Colonic mucosa (tissue), 4 donors: ENCODE measurements at regions of chr20 and their contacts with region 1.

Region 1: GRCh38 chr20:6075428-6076219 is 21.8 kb upstream of the LRRN4 start:
- DNase-seq: no peak
- H3K4me3 ChIP-seq: no peak overlapping the region
- H3K27ac ChIP-seq: no peak overlapping the region
- H3K4me1 ChIP-seq: no peaks in the 10 kb centered on the region
- H3K27me3 ChIP-seq: no peaks in the 10 kb centered on the region
- CTCF ChIP-seq: no peak

Region 2: DNA sequence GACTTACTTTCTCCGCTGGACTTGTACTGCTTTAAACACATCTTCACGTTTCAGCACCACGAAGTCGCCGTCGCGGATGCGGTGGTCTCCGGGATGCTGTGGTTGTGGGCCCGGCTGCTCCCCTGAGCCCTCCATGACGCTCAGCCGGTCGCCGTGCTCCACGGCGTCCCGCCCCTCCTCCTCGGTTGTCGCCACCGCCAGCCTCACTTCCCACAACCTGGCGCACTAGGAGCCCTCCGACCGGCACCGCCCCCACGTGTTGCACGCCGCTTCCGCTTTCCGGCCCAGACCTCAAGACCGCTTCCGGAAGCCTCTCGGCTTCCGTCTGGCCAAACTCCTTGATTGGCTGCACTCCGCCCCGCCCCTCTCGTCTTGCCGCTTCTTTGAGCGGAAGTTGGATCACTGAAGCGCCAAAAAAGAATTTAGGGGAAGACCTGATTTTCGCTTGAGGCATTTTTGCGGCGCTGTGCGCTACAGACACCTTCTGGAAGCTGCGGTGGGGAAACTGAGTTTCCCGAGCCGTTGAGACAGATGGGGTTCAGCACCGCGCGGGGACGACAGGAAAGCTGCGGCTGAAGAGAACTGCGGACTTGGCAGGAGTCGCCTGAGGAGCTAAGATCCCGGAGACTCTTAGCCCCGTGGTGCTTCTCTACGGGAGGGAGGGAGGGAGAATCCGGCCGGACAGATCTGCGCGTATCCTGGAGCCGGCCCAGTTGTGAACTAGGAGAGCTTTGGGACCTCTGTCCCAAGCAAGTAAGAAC is 125.2 kb before region 1 on chr20 and contains the starts of genes MCM8 and TRMT6:
- intact Hi-C with region 1: loop called (anchors 5 kb)
- DNase-seq: peak; percentile 98
- H3K4me3 ChIP-seq: peak within 1 kb of the TSS; percentile 92
- H3K27ac ChIP-seq: peak within 1 kb of the TSS; percentile 4
- H3K4me1 ChIP-seq: peaks cover 9% of the 10 kb centered on the region
- H3K27me3 ChIP-seq: no peaks in the 10 kb centered on the region
- CTCF ChIP-seq: no peak
- total RNA-seq, gene MCM8: 5.7 to 18.2 TPM
- total RNA-seq, gene TRMT6: 7.5 to 10.9 TPM

Region 3: DNA sequence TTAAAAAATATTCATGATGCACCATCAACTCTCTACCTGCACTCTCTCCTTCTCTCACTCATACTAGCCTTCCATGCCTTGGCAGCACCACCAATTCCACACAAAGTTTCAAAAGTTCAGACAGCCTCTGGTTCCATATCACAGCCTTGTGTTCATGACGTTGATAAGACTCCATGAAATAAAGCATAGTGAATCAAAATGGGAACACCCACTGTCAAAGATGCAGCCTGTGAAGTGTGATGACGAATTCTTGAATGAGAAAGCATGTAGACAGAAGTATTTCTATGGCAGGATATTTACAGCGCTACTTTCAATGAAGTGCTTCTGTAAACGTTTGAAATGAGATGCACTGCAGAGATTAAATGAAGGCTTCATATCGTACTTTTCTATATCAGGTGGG is 124.5 kb after region 1 on chr20:
- intact Hi-C with region 1: no loop called
- DNase-seq: no peak
- H3K4me3 ChIP-seq: no peak overlapping the region
- H3K27ac ChIP-seq: no peak overlapping the region
- H3K4me1 ChIP-seq: no peaks in the 10 kb centered on the region
- H3K27me3 ChIP-seq: no peaks in the 10 kb centered on the region
- CTCF ChIP-seq: no peak